ENCODE measurements at regions of chr5 and their contacts with region 1.

Region 1: DNA sequence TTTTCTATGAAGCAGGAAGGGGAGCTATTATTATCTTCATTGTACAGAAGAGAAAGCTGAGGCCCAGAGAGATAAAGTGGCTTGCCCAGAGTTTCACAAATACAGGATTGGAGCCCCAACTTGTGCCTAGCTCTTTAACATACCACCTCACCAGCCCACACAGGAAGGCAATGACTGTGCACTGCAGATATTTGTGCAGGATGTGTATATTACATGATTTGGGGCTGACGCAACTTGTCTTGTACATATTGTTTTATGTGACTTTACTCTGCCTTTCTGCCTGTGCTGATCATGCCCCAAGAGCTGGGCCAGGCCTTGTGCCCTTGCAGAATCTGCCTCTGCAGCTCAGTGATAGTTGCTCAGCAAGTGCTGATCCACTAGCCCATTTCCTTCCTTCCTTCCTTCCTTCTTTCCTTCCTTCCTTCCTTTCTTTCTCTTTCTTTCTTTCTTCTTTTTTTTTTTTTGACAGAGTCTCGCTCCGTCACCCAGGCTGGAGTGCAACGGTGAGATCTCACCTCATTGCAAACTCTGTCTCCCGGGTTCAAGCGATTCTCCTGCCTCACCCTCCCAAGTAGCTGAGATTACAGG is 106.6 kb upstream of the TBCA start:
- DNase-seq: peak; percentile 68
- H3K4me3 ChIP-seq: no peak overlapping the region
- H3K27ac ChIP-seq: peak overlapping the region; percentile 71
- H3K4me1 ChIP-seq: peaks cover 23% of the 10 kb centered on the region
- H3K27me3 ChIP-seq: no peaks in the 10 kb centered on the region
- CTCF ChIP-seq: no peak
- POLR2A ChIP-seq: no peak

Region 2: DNA sequence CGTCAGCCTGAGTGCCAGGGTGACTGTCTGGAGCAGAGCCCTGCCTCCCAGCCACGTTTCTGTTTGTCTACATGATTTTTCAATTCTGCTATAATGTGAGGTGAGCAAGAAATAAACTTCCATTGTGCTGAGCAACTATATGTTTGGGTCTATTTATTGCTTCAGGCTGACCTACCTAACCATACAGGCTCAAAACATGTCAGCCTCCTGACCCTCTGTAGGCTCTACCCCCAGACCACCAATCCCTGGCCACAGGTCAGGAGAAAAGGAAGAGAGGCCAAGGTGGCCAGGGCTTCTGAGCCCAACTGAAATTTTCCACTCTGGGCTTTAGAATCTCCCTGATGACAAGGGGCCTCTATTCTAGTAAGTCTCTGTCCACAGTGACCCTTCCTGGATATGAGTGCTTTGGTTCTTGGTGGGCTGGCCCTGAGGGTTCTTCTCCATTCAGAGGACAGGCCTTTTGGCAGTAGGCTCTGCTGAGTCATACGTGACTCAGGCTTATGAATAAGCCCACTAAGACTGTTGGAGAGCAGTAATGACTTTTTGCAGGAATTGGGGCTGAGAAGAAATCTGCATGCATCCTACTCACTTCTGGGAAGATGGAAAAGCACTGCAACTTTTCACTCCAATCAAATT is 10.6 kb after region 1 on chr5:
- CTCF ChIA-PET with region 1: interaction called, 3 read pairs
- POLR2A ChIA-PET with region 1: no interaction called
- dilution Hi-C with region 1: no loop called
- intact Hi-C with region 1: loop called (anchors 1 kb)
- DNase-seq: peak; percentile 87
- H3K4me3 ChIP-seq: no peak overlapping the region
- H3K27ac ChIP-seq: peak overlapping the region; percentile 21
- H3K4me1 ChIP-seq: peaks cover 3% of the 10 kb centered on the region
- H3K27me3 ChIP-seq: no peaks in the 10 kb centered on the region
- CTCF ChIP-seq: no peak
- POLR2A ChIP-seq: no peak